ENCODE measurements at regions of chr5 and their contacts with region 1.

Region 1: GRCh38 chr5:75265731-75266130 is 29.1 kb upstream of the ANKRD31 start:
- DNase-seq: peak in 1 of 2 experiments; percentile 42
- H3K4me3 ChIP-seq: no peak overlapping the region
- H3K4me3 Mint-ChIP-seq: no peak overlapping the region
- H3K27ac Mint-ChIP-seq: peak overlapping the region; percentile 43
- H3K4me1 ChIP-seq: peaks cover 18% of the 10 kb centered on the region
- H3K4me1 Mint-ChIP-seq: peaks cover 17% of the 10 kb centered on the region
- H3K27me3 ChIP-seq: no peaks in the 10 kb centered on the region
- H3K27me3 Mint-ChIP-seq: no peaks in the 10 kb centered on the region
- CTCF ChIP-seq: peak; percentile 60 to 88

Region 2: GRCh38 chr5:74673011-74673790 is 592.5 kb before region 1 on chr5:
- CTCF ChIA-PET with region 1: no interaction called
- POLR2A ChIA-PET with region 1: no interaction called
- intact Hi-C with region 1: loop called (anchors 2 kb)
- DNase-seq: peak in 1 of 2 experiments; percentile 30
- H3K4me3 ChIP-seq: no peak overlapping the region
- H3K4me3 Mint-ChIP-seq: no peak overlapping the region
- H3K27ac Mint-ChIP-seq: no peak overlapping the region
- H3K4me1 ChIP-seq: no peaks in the 10 kb centered on the region; the same call in 1 of the 2 replicates
- H3K4me1 Mint-ChIP-seq: peaks cover 18% of the 10 kb centered on the region
- H3K27me3 ChIP-seq: no peaks in the 10 kb centered on the region
- H3K27me3 Mint-ChIP-seq: no peaks in the 10 kb centered on the region
- CTCF ChIP-seq: peak; percentile 21 to 29

Region 3: GRCh38 chr5:74766849-74767578 is 498.7 kb before region 1 on chr5 and contains the starts of genes GFM2 and NSA2:
- CTCF ChIA-PET with region 1: no interaction called
- POLR2A ChIA-PET with region 1: no interaction called
- intact Hi-C with region 1: loop called (anchors 1 kb)
- DNase-seq: peak; percentile 92 to 93
- H3K4me3 ChIP-seq: peak within 1 kb of the TSS; percentile 75
- H3K4me3 Mint-ChIP-seq: peak within 1 kb of the TSS; percentile 86
- H3K27ac Mint-ChIP-seq: peak within 1 kb of the TSS; percentile 97
- H3K4me1 ChIP-seq: peaks cover 30% of the 10 kb centered on the region
- H3K4me1 Mint-ChIP-seq: peaks cover 14% of the 10 kb centered on the region
- H3K27me3 ChIP-seq: no peaks in the 10 kb centered on the region
- H3K27me3 Mint-ChIP-seq: no peaks in the 10 kb centered on the region
- CTCF ChIP-seq: no peak
- total RNA-seq, gene GFM2: 43.6 and 46.5 TPM in 2 replicates
- total RNA-seq, gene NSA2: 190 and 202 TPM in 2 replicates

Region 4: GRCh38 chr5:74927336-74927735 is 338.4 kb before region 1 on chr5:
- CTCF ChIA-PET with region 1: no interaction called
- POLR2A ChIA-PET with region 1: no interaction called
- intact Hi-C with region 1: loop called (anchors 1 kb)
- DNase-seq: no peak
- H3K4me3 ChIP-seq: no peak overlapping the region
- H3K4me3 Mint-ChIP-seq: no peak overlapping the region
- H3K27ac Mint-ChIP-seq: no peak overlapping the region
- H3K4me1 ChIP-seq: no peaks in the 10 kb centered on the region
- H3K4me1 Mint-ChIP-seq: no peaks in the 10 kb centered on the region
- H3K27me3 ChIP-seq: no peaks in the 10 kb centered on the region
- H3K27me3 Mint-ChIP-seq: no peaks in the 10 kb centered on the region
- CTCF ChIP-seq: no peak

Region 5: GRCh38 chr5:75142566-75143136 is 123.1 kb before region 1 on chr5:
- CTCF ChIA-PET with region 1: no interaction called
- POLR2A ChIA-PET with region 1: no interaction called
- intact Hi-C with region 1: no loop called
- DNase-seq: no peak
- H3K4me3 ChIP-seq: no peak overlapping the region
- H3K4me3 Mint-ChIP-seq: no peak overlapping the region
- H3K27ac Mint-ChIP-seq: no peak overlapping the region
- H3K4me1 ChIP-seq: 0 out of 2 replicates have a peak, but pooled peaks cover 4% of the 10 kb centered on the region
- H3K4me1 Mint-ChIP-seq: no peaks in the 10 kb centered on the region
- H3K27me3 ChIP-seq: no peaks in the 10 kb centered on the region
- H3K27me3 Mint-ChIP-seq: peaks cover 3% of the 10 kb centered on the region
- CTCF ChIP-seq: no peak

Region 6: GRCh38 chr5:75156585-75156984 is 109.1 kb before region 1 on chr5:
- CTCF ChIA-PET with region 1: no interaction called
- POLR2A ChIA-PET with region 1: no interaction called
- intact Hi-C with region 1: loop called (anchors 1 kb)
- DNase-seq: peak; percentile 66 to 75
- H3K4me3 ChIP-seq: no peak overlapping the region
- H3K4me3 Mint-ChIP-seq: no peak overlapping the region
- H3K27ac Mint-ChIP-seq: no peak overlapping the region
- H3K4me1 ChIP-seq: peaks cover 10% of the 10 kb centered on the region
- H3K4me1 Mint-ChIP-seq: peaks cover 21% of the 10 kb centered on the region
- H3K27me3 ChIP-seq: no peaks in the 10 kb centered on the region
- H3K27me3 Mint-ChIP-seq: no peaks in the 10 kb centered on the region
- CTCF ChIP-seq: peak; percentile 50 to 58

Region 7: GRCh38 chr5:75236322-75237316 is 29.1 kb before region 1 on chr5 and contains the start of gene ANKRD31:
- CTCF ChIA-PET with region 1: interaction called, 21 read pairs
- POLR2A ChIA-PET with region 1: interaction called, 7 read pairs
- intact Hi-C with region 1: loop called (anchors 1 kb)
- DNase-seq: peak; percentile 72 to 90
- H3K4me3 ChIP-seq: peak within 1 kb of the TSS; percentile 91
- H3K4me3 Mint-ChIP-seq: peak within 1 kb of the TSS; percentile 80
- H3K27ac Mint-ChIP-seq: peak within 1 kb of the TSS; percentile 82
- H3K4me1 ChIP-seq: peaks cover 24% of the 10 kb centered on the region
- H3K4me1 Mint-ChIP-seq: peaks cover 8% of the 10 kb centered on the region
- H3K27me3 ChIP-seq: no peaks in the 10 kb centered on the region
- H3K27me3 Mint-ChIP-seq: no peaks in the 10 kb centered on the region
- CTCF ChIP-seq: peak; percentile 38 to 86
- total RNA-seq, gene ANKRD31: 0.66 and 0.79 TPM in 2 replicates

Region 8: GRCh38 chr5:75310212-75310611 is 44.5 kb after region 1 on chr5:
- CTCF ChIA-PET with region 1: no interaction called
- POLR2A ChIA-PET with region 1: no interaction called
- intact Hi-C with region 1: no loop called
- DNase-seq: no peak
- H3K4me3 ChIP-seq: no peak overlapping the region
- H3K4me3 Mint-ChIP-seq: no peak overlapping the region
- H3K27ac Mint-ChIP-seq: no peak overlapping the region
- H3K4me1 ChIP-seq: no peaks in the 10 kb centered on the region
- H3K4me1 Mint-ChIP-seq: peaks cover 7% of the 10 kb centered on the region
- H3K27me3 ChIP-seq: no peaks in the 10 kb centered on the region
- H3K27me3 Mint-ChIP-seq: no peaks in the 10 kb centered on the region
- CTCF ChIP-seq: no peak

Region 9: GRCh38 chr5:75361310-75361709 is 95.6 kb after region 1 on chr5:
- CTCF ChIA-PET with region 1: no interaction called
- POLR2A ChIA-PET with region 1: no interaction called
- intact Hi-C with region 1: no loop called
- DNase-seq: no peak
- H3K4me3 ChIP-seq: no peak overlapping the region
- H3K4me3 Mint-ChIP-seq: no peak overlapping the region
- H3K27ac Mint-ChIP-seq: no peak overlapping the region
- H3K4me1 ChIP-seq: no peaks in the 10 kb centered on the region
- H3K4me1 Mint-ChIP-seq: no peaks in the 10 kb centered on the region
- H3K27me3 ChIP-seq: no peaks in the 10 kb centered on the region
- H3K27me3 Mint-ChIP-seq: no peaks in the 10 kb centered on the region
- CTCF ChIP-seq: no peak

Region 10: GRCh38 chr5:75412111-75412990 is 146.6 kb after region 1 on chr5:
- CTCF ChIA-PET with region 1: no interaction called
- POLR2A ChIA-PET with region 1: no interaction called
- intact Hi-C with region 1: no loop called
- DNase-seq: peak in 1 of 2 experiments; percentile 4
- H3K4me3 ChIP-seq: no peak overlapping the region
- H3K4me3 Mint-ChIP-seq: no peak overlapping the region
- H3K27ac Mint-ChIP-seq: no peak overlapping the region
- H3K4me1 ChIP-seq: no peaks in the 10 kb centered on the region
- H3K4me1 Mint-ChIP-seq: peaks cover 9% of the 10 kb centered on the region
- H3K27me3 ChIP-seq: no peaks in the 10 kb centered on the region
- H3K27me3 Mint-ChIP-seq: no peaks in the 10 kb centered on the region
- CTCF ChIP-seq: no peak

Measured in Caco-2 (cell line).